ENCODE measurements at regions of chr18 and their contacts with region 1.

Region 1: GRCh38 chr18:7566567-7567473 is at the start of gene PTPRM:
- DNase-seq: peak; percentile 79 to 91 (median 89)
- ATAC-seq: peak; percentile 98
- H3K4me3 ChIP-seq: peak within 1 kb of the TSS; percentile 69
- H3K27ac ChIP-seq: no peak within 1 kb of the TSS
- H3K4me1 ChIP-seq: peaks cover 0 to 15% of the 10 kb centered on the region in 2 experiments; a peak in 3 of 5 replicates
- H3K27me3 ChIP-seq: peaks cover 0 to 11% of the 10 kb centered on the region in 2 experiments; a peak in 2 of 5 replicates
- CTCF ChIP-seq: peak in 2 of 3 experiments; percentile 57 to 71; a peak in 4 of 6 replicates
- EP300 ChIP-seq: no peak
- POLR2A ChIP-seq: no peak
- RAD21 ChIP-seq: peak in 1 of 2 experiments; percentile 61; a peak in 2 of 4 replicates
- polyA plus RNA-seq, gene PTPRM: 0.08 TPM in 1 of 2 experiments, not detected in the other

Region 2: GRCh38 chr18:7272311-7273049 is 294.3 kb before region 1 on chr18:
- CTCF ChIA-PET with region 1: no interaction called
- POLR2A ChIA-PET with region 1: no interaction called
- in situ Hi-C with region 1: no loop called
- intact Hi-C with region 1: loop called (anchors 10 kb)
- DNase-seq: peak in 2 of 4 experiments; percentile 16 to 43
- ATAC-seq: peak; percentile 77
- H3K4me3 ChIP-seq: no peak overlapping the region
- H3K27ac ChIP-seq: no peak overlapping the region
- H3K4me1 ChIP-seq: no peaks in the 10 kb centered on the region
- H3K27me3 ChIP-seq: peaks cover 0 to 17% of the 10 kb centered on the region in 2 experiments; a peak in 1 of 5 replicates
- CTCF ChIP-seq: peak; percentile 24 to 47 (median 32); a peak in 3 of 6 replicates
- EP300 ChIP-seq: no peak
- POLR2A ChIP-seq: no peak
- RAD21 ChIP-seq: peak in 1 of 2 experiments; percentile 42; a peak in 3 of 4 replicates

Region 3: DNA sequence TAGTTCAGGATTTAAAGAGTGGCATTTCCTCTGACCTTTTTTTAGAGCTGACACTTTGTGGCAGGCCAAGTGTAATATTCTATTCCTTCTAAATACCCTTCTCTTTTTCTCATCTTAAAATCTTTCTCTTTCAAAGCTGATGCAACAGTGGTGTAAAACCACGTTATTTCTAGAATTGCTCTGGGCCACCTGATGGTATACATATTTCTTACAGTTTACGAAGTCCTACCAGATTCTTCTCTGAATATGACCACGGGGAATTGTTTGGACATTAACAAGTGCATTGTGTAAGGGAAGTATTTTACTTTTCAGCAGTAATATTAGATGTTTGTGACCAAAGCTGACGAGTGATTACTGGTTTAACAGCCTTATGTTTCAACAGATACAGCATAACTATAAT is 110.2 kb after region 1 on chr18:
- CTCF ChIA-PET with region 1: no interaction called
- POLR2A ChIA-PET with region 1: no interaction called
- in situ Hi-C with region 1: no loop called
- intact Hi-C with region 1: no loop called
- DNase-seq: no peak
- ATAC-seq: peak; percentile 19; the same call in 1 of the 3 replicates
- H3K4me3 ChIP-seq: no peak overlapping the region
- H3K27ac ChIP-seq: no peak overlapping the region
- H3K4me1 ChIP-seq: 0 out of 5 replicates have a peak, but pooled peaks cover 0 to 5% of the 10 kb centered on the region in 2 experiments
- H3K27me3 ChIP-seq: no peaks in the 10 kb centered on the region; a peak in 2 of 5 replicates
- CTCF ChIP-seq: no peak
- EP300 ChIP-seq: no peak
- POLR2A ChIP-seq: no peak
- RAD21 ChIP-seq: no peak